ENCODE measurements at regions of chr4 and their contacts with region 1.

Region 1: GRCh38 chr4:6250235-6250983 is 19.2 kb upstream of the WFS1 start:
- DNase-seq: peak; percentile 7
- H3K4me3 ChIP-seq: no peak overlapping the region
- H3K27me3 ChIP-seq: peaks cover 10% of the 10 kb centered on the region
- CTCF ChIP-seq: peak; percentile 77

Region 2: GRCh38 chr4:5998333-5998936 is 252.0 kb before region 1 on chr4:
- CTCF ChIA-PET with region 1: interaction called, 12 read pairs
- POLR2A ChIA-PET with region 1: no interaction called
- DNase-seq: no peak
- H3K4me3 ChIP-seq: no peak overlapping the region
- H3K27me3 ChIP-seq: no peaks in the 10 kb centered on the region
- CTCF ChIP-seq: peak; percentile 90

Region 3: GRCh38 chr4:6065934-6066590 is 184.3 kb before region 1 on chr4:
- CTCF ChIA-PET with region 1: no interaction called
- POLR2A ChIA-PET with region 1: no interaction called
- DNase-seq: no peak
- H3K4me3 ChIP-seq: no peak overlapping the region
- H3K27me3 ChIP-seq: no peaks in the 10 kb centered on the region
- CTCF ChIP-seq: no peak

Region 4: GRCh38 chr4:6239968-6240367 is 10.4 kb before region 1 on chr4:
- CTCF ChIA-PET with region 1: interaction called, 20 read pairs
- POLR2A ChIA-PET with region 1: no interaction called
- DNase-seq: no peak
- H3K4me3 ChIP-seq: no peak overlapping the region
- H3K27me3 ChIP-seq: peaks cover 2% of the 10 kb centered on the region
- CTCF ChIP-seq: no peak

Region 5: GRCh38 chr4:6269616-6270511 is 19.5 kb after region 1 on chr4 and contains the start of gene WFS1:
- CTCF ChIA-PET with region 1: interaction called, 107 read pairs
- POLR2A ChIA-PET with region 1: no interaction called
- DNase-seq: peak; percentile 81
- H3K4me3 ChIP-seq: peak within 1 kb of the TSS; percentile 92
- H3K27me3 ChIP-seq: no peaks in the 10 kb centered on the region
- CTCF ChIP-seq: no peak
- polyA plus RNA-seq, gene WFS1: 40.3 and 66.4 TPM in 2 replicates

Region 6: DNA sequence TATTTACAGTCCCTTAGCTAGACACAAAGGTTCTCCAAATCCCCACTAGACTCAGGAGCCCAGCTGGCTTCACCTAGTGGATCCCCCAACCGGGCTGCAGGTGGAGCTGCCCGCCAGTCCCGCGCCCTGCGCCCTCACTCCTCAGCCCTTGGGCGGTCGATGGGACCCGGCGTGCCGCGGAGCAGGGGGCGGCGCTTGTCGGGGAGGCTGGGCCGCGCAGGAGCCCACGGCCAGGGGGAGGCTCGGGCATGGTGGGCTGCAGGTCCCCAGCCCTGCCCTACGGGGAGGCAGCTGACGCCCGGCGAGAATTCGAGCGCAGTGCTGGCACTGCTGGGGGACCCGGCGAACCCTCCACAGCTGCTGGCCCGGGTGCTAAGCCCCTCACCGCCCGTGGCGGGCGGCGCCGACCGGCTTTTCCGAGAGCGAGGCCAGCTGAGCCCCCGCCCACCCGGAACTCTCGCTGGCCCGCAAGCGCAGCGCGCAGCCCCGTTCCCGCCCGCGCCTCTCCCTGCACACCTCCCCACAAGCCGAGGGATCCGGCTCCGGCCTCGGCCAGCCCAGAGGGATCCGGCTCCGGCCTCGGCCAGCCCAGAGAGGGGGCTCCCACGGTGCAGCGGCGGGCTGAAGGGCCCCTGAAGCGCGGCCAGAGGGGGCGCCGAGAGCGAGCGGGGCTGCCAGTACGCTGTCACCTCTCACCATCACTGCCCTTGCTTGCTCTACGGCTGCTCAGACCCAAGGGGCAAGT is 58.7 kb after region 1 on chr4:
- CTCF ChIA-PET with region 1: interaction called, 15 read pairs
- POLR2A ChIA-PET with region 1: no interaction called
- DNase-seq: no peak
- H3K4me3 ChIP-seq: no peak overlapping the region; the same call in none of the 2 replicates
- H3K27me3 ChIP-seq: peaks cover 10% of the 10 kb centered on the region
- CTCF ChIP-seq: no peak

Region 7: GRCh38 chr4:6327041-6327917 is 76.9 kb after region 1 on chr4:
- CTCF ChIA-PET with region 1: interaction called, 496 read pairs
- POLR2A ChIA-PET with region 1: no interaction called
- DNase-seq: no peak
- H3K4me3 ChIP-seq: no peak overlapping the region
- H3K27me3 ChIP-seq: peaks cover 4% of the 10 kb centered on the region; the same call in 1 of the 2 replicates
- CTCF ChIP-seq: peak; percentile 91

Measured in BJ (cell line).